Naive thymus-derived CD4-positive, alpha-beta T cell (primary cell): ENCODE measurements at regions of chr1 and their contacts with region 1.

Region 1: DNA sequence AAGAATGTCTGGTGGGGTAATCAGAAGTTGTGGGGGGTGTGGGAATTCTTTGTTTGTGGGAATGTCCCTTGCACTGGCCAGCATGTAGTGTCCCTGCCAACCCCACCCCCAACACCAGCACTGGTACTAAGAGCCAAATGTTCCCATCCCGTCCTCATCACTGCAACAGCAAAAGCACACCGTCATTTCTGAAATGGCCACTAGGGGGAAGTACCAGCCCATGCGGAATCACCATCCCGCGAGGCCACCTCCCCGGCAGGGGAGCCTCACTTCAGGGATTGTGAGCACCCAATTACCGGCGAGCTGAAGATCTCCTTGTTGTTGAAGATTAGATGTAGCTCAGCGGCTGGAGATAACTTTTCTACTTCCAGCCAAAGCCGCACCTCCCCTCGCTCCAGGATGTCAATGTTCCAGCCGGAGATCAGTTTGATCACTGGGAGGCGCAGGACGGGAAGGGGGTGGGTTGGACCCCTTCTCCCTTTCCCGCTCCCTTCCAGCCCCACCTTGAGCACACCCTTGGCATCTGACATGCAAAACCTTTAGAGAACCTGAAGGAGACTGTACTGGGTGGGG is 41.0 kb downstream of the MYOM3 start:
- DNase-seq: peak; percentile 36 to 73 (median 66)
- ATAC-seq: peak; percentile 92
- H3K4me3 ChIP-seq: no peak overlapping the region
- H3K4me3 Mint-ChIP-seq: peak overlapping the region in 1 of 10 donors; percentile 6
- H3K27ac ChIP-seq: no peak overlapping the region
- H3K27ac Mint-ChIP-seq: no peak overlapping the region
- H3K4me1 ChIP-seq: no peaks in the 10 kb centered on the region
- H3K4me1 Mint-ChIP-seq: peaks cover 0 to 5% (median 4%) of the 10 kb centered on the region in 7 donors
- H3K27me3 ChIP-seq: no peaks in the 10 kb centered on the region
- H3K27me3 Mint-ChIP-seq: peaks cover 0 to 10% (median 4%) of the 10 kb centered on the region in 5 donors

Region 2: DNA sequence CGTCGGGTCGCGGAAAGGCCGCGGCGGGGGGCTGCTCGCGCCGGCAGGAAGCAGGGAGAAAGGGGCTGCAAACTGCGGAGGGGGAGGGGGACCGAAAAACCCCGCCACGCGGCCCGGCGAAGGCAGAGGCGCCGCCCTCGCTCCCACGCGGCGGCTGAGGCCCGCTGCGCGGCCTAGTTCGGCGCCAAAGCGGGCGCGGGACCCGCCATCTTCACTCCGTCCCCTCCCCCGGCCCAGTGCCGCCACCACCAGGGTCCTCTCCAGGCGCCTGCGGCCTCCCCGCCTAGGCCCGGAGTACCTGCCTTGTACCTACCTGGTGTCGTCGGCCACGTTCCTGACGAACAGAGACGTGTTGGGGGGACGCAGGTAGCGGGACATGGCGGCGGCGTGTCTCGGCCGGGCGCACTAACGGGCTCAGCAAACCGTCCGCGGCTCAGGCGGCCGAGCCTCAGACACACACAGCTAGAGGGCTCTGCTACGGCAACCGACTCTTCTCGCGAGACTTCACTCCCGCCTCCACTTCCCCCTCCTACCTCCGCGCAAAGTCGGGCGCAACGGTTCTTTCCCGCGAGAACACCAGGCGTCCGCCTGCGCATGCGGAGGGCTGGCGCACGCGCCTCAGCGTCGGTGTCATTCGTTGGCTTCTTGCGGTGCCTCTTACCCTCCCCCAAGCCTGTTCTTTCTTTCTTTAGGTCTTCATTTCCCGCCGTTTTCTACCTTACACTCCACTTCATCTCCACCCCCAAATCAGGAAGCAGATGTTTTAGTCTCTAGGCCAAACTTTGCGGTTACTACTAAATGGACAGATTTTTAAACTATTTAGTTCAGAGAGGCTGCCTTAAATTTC is 90.8 kb before region 1 on chr1 and contains the start of gene SRSF10:
- CTCF ChIA-PET with region 1: no interaction called
- POLR2A ChIA-PET with region 1: no interaction called
- intact Hi-C with region 1: no loop called
- DNase-seq: peak; percentile 91 to 99 (median 98)
- ATAC-seq: peak; percentile 97
- H3K4me3 ChIP-seq: peak within 1 kb of the TSS; percentile 75
- H3K4me3 Mint-ChIP-seq: peak within 1 kb of the TSS; percentile 87 to 98 (median 94)
- H3K27ac ChIP-seq: peak within 1 kb of the TSS; percentile 98
- H3K27ac Mint-ChIP-seq: peak within 1 kb of the TSS; percentile 94 to 99 (median 96)
- H3K4me1 ChIP-seq: peaks cover 31 to 43% of the 10 kb centered on the region in 2 donors
- H3K4me1 Mint-ChIP-seq: peaks cover 39 to 57% (median 53%) of the 10 kb centered on the region in 7 donors
- H3K27me3 ChIP-seq: no peaks in the 10 kb centered on the region
- H3K27me3 Mint-ChIP-seq: peaks cover 0 to 4% (median 0%) of the 10 kb centered on the region in 5 donors
- total RNA-seq, gene SRSF10: 170 to 252 (median 193) TPM

Region 3: DNA sequence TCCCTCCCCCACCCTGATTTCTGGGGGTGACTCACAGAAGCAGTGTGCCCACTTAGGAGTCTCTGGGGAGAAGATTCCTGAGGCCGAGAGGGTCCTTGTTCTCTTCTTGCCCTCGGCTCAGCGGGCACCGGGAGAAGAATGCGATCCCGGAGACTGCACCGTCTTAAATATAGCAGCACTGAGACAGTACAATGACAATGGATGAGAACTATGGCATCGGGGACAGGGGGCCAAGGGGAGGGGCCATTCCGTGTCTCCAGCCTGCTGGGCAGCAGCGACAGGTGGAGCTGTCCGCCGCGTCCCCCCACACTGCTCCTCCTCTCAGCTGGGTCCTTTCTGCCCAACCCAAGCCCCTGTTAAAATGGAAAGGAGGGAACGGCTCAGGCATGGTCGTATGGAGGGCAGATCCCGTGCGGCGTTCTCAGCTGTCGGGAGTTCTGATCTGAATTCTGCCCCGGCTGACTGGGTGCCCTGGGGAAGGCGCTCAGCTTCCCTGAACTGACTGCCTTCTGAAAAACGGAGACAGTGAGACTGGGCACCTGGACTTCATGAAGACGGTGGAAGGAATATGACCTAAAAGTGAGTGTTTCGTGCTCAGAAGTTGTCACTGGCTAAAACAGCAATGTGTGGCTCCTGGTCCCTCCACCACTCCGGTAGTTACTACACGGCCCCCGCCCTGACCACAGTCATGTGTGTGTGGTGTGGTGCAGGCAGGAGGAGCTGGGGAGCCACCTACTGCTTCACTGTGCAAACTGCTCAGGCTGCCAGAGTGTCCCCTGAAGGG is 41.3 kb after region 1 on chr1 and contains the start of gene MYOM3:
- CTCF ChIA-PET with region 1: interaction called, 3 read pairs
- POLR2A ChIA-PET with region 1: no interaction called
- intact Hi-C with region 1: loop called (anchors 1 kb)
- DNase-seq: peak in 8 of 9 donors; percentile 28 to 58 (median 36)
- ATAC-seq: peak; percentile 89
- H3K4me3 ChIP-seq: no peak within 1 kb of the TSS
- H3K4me3 Mint-ChIP-seq: peak within 1 kb of the TSS in 6 of 10 donors; percentile 5 to 59 (median 42)
- H3K27ac ChIP-seq: no peak within 1 kb of the TSS
- H3K27ac Mint-ChIP-seq: no peak within 1 kb of the TSS
- H3K4me1 ChIP-seq: no peaks in the 10 kb centered on the region
- H3K4me1 Mint-ChIP-seq: peaks cover 0 to 11% (median 5%) of the 10 kb centered on the region in 7 donors
- H3K27me3 ChIP-seq: no peaks in the 10 kb centered on the region
- H3K27me3 Mint-ChIP-seq: peaks cover 4 to 26% (median 12%) of the 10 kb centered on the region in 5 donors
- total RNA-seq, gene MYOM3: not detected

Region 4: GRCh38 chr1:24635195-24635843 is 564.4 kb after region 1 on chr1:
- CTCF ChIA-PET with region 1: no interaction called
- POLR2A ChIA-PET with region 1: no interaction called
- intact Hi-C with region 1: loop called in 1 of 2 experiments (anchors 5 kb)
- DNase-seq: peak in 7 of 9 donors; percentile 39 to 69 (median 62)
- ATAC-seq: peak; percentile 85
- H3K4me3 ChIP-seq: no peak overlapping the region
- H3K4me3 Mint-ChIP-seq: no peak overlapping the region
- H3K27ac ChIP-seq: no peak overlapping the region
- H3K27ac Mint-ChIP-seq: peak overlapping the region in 5 of 9 donors; percentile 0 to 77 (median 64)
- H3K4me1 ChIP-seq: no peaks in the 10 kb centered on the region
- H3K4me1 Mint-ChIP-seq: peaks cover 2 to 14% (median 8%) of the 10 kb centered on the region in 7 donors
- H3K27me3 ChIP-seq: no peaks in the 10 kb centered on the region
- H3K27me3 Mint-ChIP-seq: peaks cover 4 to 21% (median 8%) of the 10 kb centered on the region in 5 donors